Heart right ventricle (tissue), 16 donors: ENCODE measurements at regions of chr5 and their contacts with region 1.

Region 1: GRCh38 chr5:157431544-157432200 is 28.3 kb upstream of the NIPAL4 start:
- DNase-seq: peak in 1 of 2 donors; percentile 45
- ATAC-seq: peak in 7 of 8 donors; percentile 70 to 88 (median 82)
- H3K4me3 ChIP-seq: no peak overlapping the region
- H3K27ac ChIP-seq: no peak overlapping the region
- H3K4me1 ChIP-seq: peaks cover 0 to 6% (median 0%) of the 10 kb centered on the region in 9 donors
- H3K27me3 ChIP-seq: no peaks in the 10 kb centered on the region
- CTCF ChIP-seq: peak; percentile 33 to 74 (median 60)

Region 2: GRCh38 chr5:157366741-157367674 is 64.7 kb before region 1 on chr5:
- intact Hi-C with region 1: loop called in 1 of 10 experiments (anchors 2 kb)
- DNase-seq: peak in 1 of 2 donors; percentile 28
- ATAC-seq: peak in 5 of 8 donors; percentile 47 to 63 (median 60)
- H3K4me3 ChIP-seq: no peak overlapping the region
- H3K27ac ChIP-seq: no peak overlapping the region
- H3K4me1 ChIP-seq: peaks cover 0 to 12% (median 5%) of the 10 kb centered on the region in 9 donors
- H3K27me3 ChIP-seq: no peaks in the 10 kb centered on the region
- CTCF ChIP-seq: peak in 7 of 9 donors; percentile 33 to 62 (median 51)

Region 3: GRCh38 chr5:157471709-157472108 is 40.0 kb after region 1 on chr5:
- intact Hi-C with region 1: loop called in 7 of 10 experiments (anchors 5 kb)
- DNase-seq: no peak
- ATAC-seq: no peak
- H3K4me3 ChIP-seq: no peak overlapping the region
- H3K27ac ChIP-seq: no peak overlapping the region
- H3K4me1 ChIP-seq: peaks cover 0 to 39% (median 16%) of the 10 kb centered on the region in 9 donors
- H3K27me3 ChIP-seq: no peaks in the 10 kb centered on the region
- CTCF ChIP-seq: peak in 8 of 9 donors; percentile 17 to 62 (median 53)

Region 4: GRCh38 chr5:157603333-157604190 is 171.9 kb after region 1 on chr5:
- intact Hi-C with region 1: no loop called
- DNase-seq: no peak
- ATAC-seq: peak in 5 of 8 donors; percentile 25 to 57 (median 49)
- H3K4me3 ChIP-seq: no peak overlapping the region
- H3K27ac ChIP-seq: peak overlapping the region in 1 of 10 donors; percentile 18
- H3K4me1 ChIP-seq: peaks cover 0 to 41% (median 0%) of the 10 kb centered on the region in 9 donors
- H3K27me3 ChIP-seq: no peaks in the 10 kb centered on the region
- CTCF ChIP-seq: no peak